Activated naive CD8-positive, alpha-beta T cell treated with anti-CD3 and anti-CD28 coated beads, Interleukin-2, amount 10 ng/mL, durations not matched to agents 7 days and 5 days (primary cell): ENCODE measurements at regions of chr6 and their contacts with region 1.

Region 1: DNA sequence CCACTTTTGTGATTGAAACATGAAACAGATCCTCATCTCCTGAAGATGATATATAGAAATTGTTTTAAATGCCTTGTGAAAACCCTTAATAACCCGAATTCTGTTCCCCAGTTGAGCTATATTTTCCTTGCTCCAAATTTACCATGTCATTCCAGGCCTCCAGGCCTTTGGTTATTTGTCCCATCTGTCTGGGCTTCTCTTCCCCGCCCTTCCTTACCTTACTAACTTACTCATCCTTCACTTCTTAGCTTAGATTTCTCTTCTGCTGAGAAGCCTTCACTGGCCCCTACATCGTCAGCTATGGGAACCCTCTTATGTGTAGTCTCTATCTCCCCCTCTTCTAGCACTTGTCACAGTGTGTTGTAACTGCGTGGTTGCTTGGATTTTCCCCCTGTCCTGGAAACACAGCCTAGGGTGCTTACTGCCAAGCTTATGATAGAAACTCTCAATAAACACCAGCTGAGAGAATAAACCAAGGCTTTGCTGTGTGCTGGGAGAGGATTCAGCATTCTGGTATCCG is 68.6 kb downstream of the SGK1 start:
- DNase-seq: no peak
- ATAC-seq: no peak
- H3K4me3 Mint-ChIP-seq: no peak overlapping the region
- H3K27ac Mint-ChIP-seq: peak overlapping the region; percentile 56
- H3K4me1 Mint-ChIP-seq: peaks cover 55% of the 10 kb centered on the region
- H3K27me3 Mint-ChIP-seq: no peaks in the 10 kb centered on the region

Region 2: DNA sequence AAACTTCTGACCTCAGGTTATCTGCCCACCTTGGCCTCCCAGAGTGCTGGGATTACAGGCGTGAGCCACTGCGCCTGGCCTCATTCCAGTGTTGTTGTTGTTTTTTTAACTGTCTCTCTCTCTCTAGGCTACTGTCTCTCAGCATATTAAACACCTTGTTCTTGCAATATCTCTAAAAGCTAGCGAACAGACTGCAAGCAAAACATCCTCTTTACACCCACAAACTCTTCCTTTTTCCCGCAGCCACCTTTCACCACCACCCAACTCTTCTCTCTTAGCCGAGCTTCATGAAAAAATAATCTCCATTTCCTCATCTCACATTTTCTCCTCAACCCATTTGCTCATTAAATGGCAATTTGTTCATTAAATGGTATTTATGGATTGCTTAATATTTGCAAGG is 23.1 kb after region 1 on chr6:
- POLR2A ChIA-PET with region 1: interaction called, 11 read pairs
- DNase-seq: no peak
- ATAC-seq: no peak
- H3K4me3 Mint-ChIP-seq: peak overlapping the region; percentile 68
- H3K27ac Mint-ChIP-seq: peak overlapping the region; percentile 76
- H3K4me1 Mint-ChIP-seq: peaks cover 33% of the 10 kb centered on the region
- H3K27me3 Mint-ChIP-seq: no peaks in the 10 kb centered on the region

Region 3: GRCh38 chr6:134303903-134304302 is 54.6 kb after region 1 on chr6:
- POLR2A ChIA-PET with region 1: no interaction called
- DNase-seq: no peak
- ATAC-seq: no peak
- H3K4me3 Mint-ChIP-seq: no peak overlapping the region
- H3K27ac Mint-ChIP-seq: no peak overlapping the region
- H3K4me1 Mint-ChIP-seq: peaks cover 16% of the 10 kb centered on the region
- H3K27me3 Mint-ChIP-seq: peaks cover 2% of the 10 kb centered on the region